ENCODE measurements at regions of chr7 and their contacts with region 1.

Region 1: GRCh38 chr7:140003913-140004382 is 58.8 kb downstream of the PARP12 start:
- DNase-seq: peak; percentile 81

Region 2: GRCh38 chr7:139482662-139483469 is 521.1 kb before region 1 on chr7:
- in situ Hi-C with region 1: loop called (anchors 25 kb)
- DNase-seq: no peak